ENCODE measurements at regions of chr3 and their contacts with region 1.

Region 1: DNA sequence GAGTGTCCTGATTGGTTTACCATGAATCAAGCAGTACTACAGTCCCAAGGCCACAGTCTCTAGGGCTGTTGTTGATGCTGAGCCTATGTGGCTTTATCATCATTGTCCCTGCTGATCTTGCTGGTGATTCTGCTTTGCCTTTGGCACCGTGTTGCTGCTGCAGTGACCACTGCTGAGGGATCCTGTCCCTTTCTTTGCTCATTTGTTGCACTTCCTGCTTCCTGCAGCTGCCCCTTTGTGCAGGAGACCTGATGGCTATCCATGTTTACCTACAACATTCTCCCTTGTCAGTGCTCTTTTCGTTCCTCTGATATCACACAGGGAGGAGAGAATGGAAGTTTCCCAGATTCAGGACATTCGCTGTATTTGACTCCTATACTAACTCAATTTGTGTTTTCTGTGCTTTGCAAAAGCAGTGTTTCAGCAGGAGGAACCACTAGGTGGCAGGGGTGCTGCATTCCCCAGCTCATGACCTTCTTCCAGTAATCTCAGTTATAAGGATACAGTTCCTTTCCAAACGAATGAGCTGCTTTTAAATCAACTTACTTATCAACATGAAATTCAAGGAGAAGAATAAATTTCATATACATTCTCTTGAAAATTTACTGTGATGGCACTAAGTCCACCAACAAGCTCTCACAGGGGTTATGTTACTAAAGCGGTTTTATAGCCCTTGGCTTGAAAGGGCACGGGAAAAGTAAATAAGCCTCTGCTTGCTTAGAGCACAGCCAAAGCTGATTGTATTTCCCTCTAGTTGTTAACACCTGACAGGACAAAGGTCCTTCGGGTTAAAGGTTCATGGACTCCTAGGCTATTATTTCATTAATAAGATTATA is 9.7 kb upstream of the THUMPD3 start:
- DNase-seq: peak; percentile 77
- H3K4me3 Mint-ChIP-seq: peak overlapping the region; percentile 33
- H3K27ac Mint-ChIP-seq: peak overlapping the region; percentile 83
- H3K4me1 Mint-ChIP-seq: peaks cover 75% of the 10 kb centered on the region
- H3K27me3 Mint-ChIP-seq: no peaks in the 10 kb centered on the region
- CTCF ChIP-seq: peak; percentile 82

Region 2: GRCh38 chr3:9316881-9317361 is 36.2 kb before region 1 on chr3:
- CTCF ChIA-PET with region 1: no interaction called
- intact Hi-C with region 1: loop called (anchors 5 kb)
- DNase-seq: peak; percentile 26
- H3K4me3 Mint-ChIP-seq: peak overlapping the region; percentile 59
- H3K27ac Mint-ChIP-seq: peak overlapping the region; percentile 56
- H3K4me1 Mint-ChIP-seq: peaks cover 26% of the 10 kb centered on the region
- H3K27me3 Mint-ChIP-seq: no peaks in the 10 kb centered on the region
- CTCF ChIP-seq: no peak

Region 3: GRCh38 chr3:9649791-9650521 is 296.8 kb after region 1 on chr3:
- CTCF ChIA-PET with region 1: no interaction called
- intact Hi-C with region 1: loop called (anchors 10 kb)
- DNase-seq: no peak
- H3K4me3 Mint-ChIP-seq: peak overlapping the region; percentile 84
- H3K27ac Mint-ChIP-seq: peak overlapping the region; percentile 87
- H3K4me1 Mint-ChIP-seq: no peaks in the 10 kb centered on the region
- H3K27me3 Mint-ChIP-seq: no peaks in the 10 kb centered on the region
- CTCF ChIP-seq: no peak